GM12878 (cell line): ENCODE measurements at regions of chr3 and their contacts with region 1.

Region 1: DNA sequence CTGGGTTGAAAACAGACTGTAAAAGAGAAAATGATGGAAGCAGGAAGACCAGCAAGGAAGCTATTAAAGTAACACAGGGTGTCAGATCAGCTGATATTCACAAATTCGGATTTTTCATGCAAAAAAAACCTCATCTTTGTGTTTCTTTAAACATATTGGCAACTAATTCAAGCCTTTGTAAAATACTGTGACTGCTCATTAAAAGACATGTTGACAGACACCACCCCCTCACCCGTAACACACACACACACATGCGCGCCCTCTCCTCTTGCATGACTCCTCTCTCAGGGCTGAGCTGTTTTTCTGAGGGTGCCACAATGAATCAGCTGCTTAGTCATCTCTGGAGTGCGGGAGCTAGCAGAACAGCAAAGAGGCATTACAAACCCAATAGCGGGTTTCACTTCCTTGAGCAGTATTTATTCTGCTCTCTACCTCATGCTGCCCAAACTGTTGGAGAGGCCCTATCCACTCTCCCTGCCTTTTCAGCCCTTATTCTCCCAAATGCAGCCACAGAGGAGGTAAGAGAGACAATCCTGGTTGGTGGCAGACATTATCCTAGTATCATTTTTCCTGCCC is 35.8 kb upstream of the CCDC80 start:
- DNase-seq: peak; percentile 96
- ATAC-seq: peak; percentile 99
- H3K4me3 ChIP-seq: no peak overlapping the region
- H3K27ac ChIP-seq: no peak overlapping the region
- H3K4me1 ChIP-seq: peaks cover 21% of the 10 kb centered on the region
- H3K27me3 ChIP-seq: peaks cover 3 to 4% of the 10 kb centered on the region in 2 experiments; a peak in 3 of 4 replicates
- CTCF ChIP-seq: no peak
- EP300 ChIP-seq: peak; percentile 98 to 100
- POLR2A ChIP-seq: no peak
- RAD21 ChIP-seq: no peak

Region 2: DNA sequence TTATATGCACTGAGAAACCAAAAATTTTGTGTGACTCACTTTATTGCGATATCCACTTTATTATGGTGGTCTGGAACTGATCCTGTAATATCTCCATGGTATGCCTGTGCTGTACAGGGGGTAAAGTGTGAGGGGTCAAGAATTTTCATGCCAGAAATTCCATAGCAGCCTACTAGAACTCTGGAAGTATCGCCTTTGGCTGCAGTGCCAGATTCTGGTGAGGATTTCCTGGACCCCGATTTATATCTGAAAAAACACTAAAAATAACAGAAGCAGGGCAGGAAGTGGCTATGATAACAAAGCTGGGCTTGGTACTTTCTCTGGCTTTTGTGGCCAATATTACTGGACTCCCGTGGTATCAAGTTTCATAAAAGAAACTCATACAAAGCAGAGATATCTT is 72.2 kb before region 1 on chr3:
- CTCF ChIA-PET with region 1: no interaction called
- POLR2A ChIA-PET with region 1: no interaction called
- RAD21 ChIA-PET with region 1: no interaction called
- SMC1A ChIA-PET with region 1: no interaction called
- in situ Hi-C with region 1: no loop called
- intact Hi-C with region 1: loop called (anchors 5 kb)
- DNase-seq: no peak
- ATAC-seq: no peak
- H3K4me3 ChIP-seq: no peak overlapping the region
- H3K27ac ChIP-seq: no peak overlapping the region
- H3K4me1 ChIP-seq: peaks cover 16% of the 10 kb centered on the region
- H3K27me3 ChIP-seq: peaks cover 0 to 8% of the 10 kb centered on the region in 2 experiments; a peak in 2 of 4 replicates
- CTCF ChIP-seq: no peak
- EP300 ChIP-seq: no peak
- POLR2A ChIP-seq: no peak
- RAD21 ChIP-seq: no peak

Region 3: GRCh38 chr3:112709911-112710310 is 33.2 kb after region 1 on chr3:
- CTCF ChIA-PET with region 1: no interaction called
- POLR2A ChIA-PET with region 1: no interaction called
- RAD21 ChIA-PET with region 1: no interaction called
- SMC1A ChIA-PET with region 1: no interaction called
- in situ Hi-C with region 1: no loop called
- intact Hi-C with region 1: no loop called
- DNase-seq: no peak
- ATAC-seq: no peak
- H3K4me3 ChIP-seq: no peak overlapping the region
- H3K27ac ChIP-seq: no peak overlapping the region
- H3K4me1 ChIP-seq: no peaks in the 10 kb centered on the region
- H3K27me3 ChIP-seq: no peaks in the 10 kb centered on the region
- CTCF ChIP-seq: no peak
- EP300 ChIP-seq: no peak
- POLR2A ChIP-seq: no peak
- RAD21 ChIP-seq: no peak

Region 4: DNA sequence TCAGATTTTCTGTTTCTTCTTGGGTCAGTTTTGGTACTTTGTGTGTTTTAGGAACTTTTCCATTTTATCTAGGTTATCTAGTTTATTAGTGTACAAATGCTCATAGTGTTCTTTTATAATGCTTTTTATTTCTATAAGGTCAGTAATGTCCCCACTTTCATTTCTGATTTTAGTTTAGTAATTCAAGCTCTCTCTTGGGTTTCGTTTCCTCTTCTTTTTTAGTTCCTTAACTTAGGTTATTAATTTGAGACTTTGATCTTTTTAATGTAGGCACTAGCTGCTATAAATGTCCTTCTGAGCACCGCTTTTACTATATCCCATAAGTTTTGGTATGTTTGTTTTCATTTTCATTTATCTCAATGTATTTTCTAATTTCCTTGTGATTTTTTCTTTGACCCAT is 196.9 kb after region 1 on chr3:
- CTCF ChIA-PET with region 1: no interaction called
- POLR2A ChIA-PET with region 1: no interaction called
- RAD21 ChIA-PET with region 1: no interaction called
- SMC1A ChIA-PET with region 1: no interaction called
- in situ Hi-C with region 1: no loop called
- intact Hi-C with region 1: loop called (anchors 5 kb)
- DNase-seq: no peak
- ATAC-seq: peak; percentile 94
- H3K4me3 ChIP-seq: 0 out of 2 replicates have a peak overlapping the region, but pooled peaks have one; percentile 46
- H3K27ac ChIP-seq: peak overlapping the region; percentile 56
- H3K4me1 ChIP-seq: peaks cover 7% of the 10 kb centered on the region
- H3K27me3 ChIP-seq: no peaks in the 10 kb centered on the region
- CTCF ChIP-seq: no peak
- EP300 ChIP-seq: no peak
- POLR2A ChIP-seq: no peak
- RAD21 ChIP-seq: no peak